ENCODE measurements at regions of chr9 and their contacts with region 1.

Region 1: GRCh38 chr9:34252670-34253459 is 74.0 kb downstream of the UBAP1 start:
- DNase-seq: peak; percentile 63 to 92
- ATAC-seq: peak; percentile 75
- H3K4me3 ChIP-seq: no peak overlapping the region
- H3K27ac ChIP-seq: peak overlapping the region in 1 of 2 donors; percentile 63
- H3K4me1 ChIP-seq: peaks cover 0 to 3% of the 10 kb centered on the region in 2 donors
- H3K27me3 ChIP-seq: no peaks in the 10 kb centered on the region

Region 2: GRCh38 chr9:33816327-33817252 is 436.3 kb before region 1 on chr9 and contains the start of gene UBE2R2:
- intact Hi-C with region 1: loop called in 1 of 2 experiments (anchors 10 kb)
- DNase-seq: peak; percentile 94 to 97
- ATAC-seq: peak; percentile 96
- H3K4me3 ChIP-seq: peak within 1 kb of the TSS; percentile 73 to 98
- H3K27ac ChIP-seq: peak within 1 kb of the TSS; percentile 79 to 93
- H3K4me1 ChIP-seq: no peaks in the 10 kb centered on the region
- H3K27me3 ChIP-seq: no peaks in the 10 kb centered on the region
- total RNA-seq, gene UBE2R2: 34.3 to 35.4 TPM

Region 3: GRCh38 chr9:34126207-34127034 is 126.4 kb before region 1 on chr9 and contains the start of gene DCAF12:
- intact Hi-C with region 1: loop called in 1 of 2 experiments (anchors 5 kb)
- DNase-seq: peak; percentile 95 to 97
- ATAC-seq: peak; percentile 98
- H3K4me3 ChIP-seq: peak within 1 kb of the TSS; percentile 74 to 91
- H3K27ac ChIP-seq: peak within 1 kb of the TSS; percentile 20 to 79
- H3K4me1 ChIP-seq: no peaks in the 10 kb centered on the region
- H3K27me3 ChIP-seq: no peaks in the 10 kb centered on the region
- total RNA-seq, gene DCAF12: 20.6 to 35.2 TPM

Region 4: GRCh38 chr9:34343605-34344004 is 90.7 kb after region 1 on chr9:
- intact Hi-C with region 1: no loop called
- DNase-seq: no peak
- ATAC-seq: no peak
- H3K4me3 ChIP-seq: no peak overlapping the region
- H3K27ac ChIP-seq: peak overlapping the region; percentile 46 to 89
- H3K4me1 ChIP-seq: peaks cover 2 to 4% of the 10 kb centered on the region in 2 donors
- H3K27me3 ChIP-seq: no peaks in the 10 kb centered on the region

Region 5: DNA sequence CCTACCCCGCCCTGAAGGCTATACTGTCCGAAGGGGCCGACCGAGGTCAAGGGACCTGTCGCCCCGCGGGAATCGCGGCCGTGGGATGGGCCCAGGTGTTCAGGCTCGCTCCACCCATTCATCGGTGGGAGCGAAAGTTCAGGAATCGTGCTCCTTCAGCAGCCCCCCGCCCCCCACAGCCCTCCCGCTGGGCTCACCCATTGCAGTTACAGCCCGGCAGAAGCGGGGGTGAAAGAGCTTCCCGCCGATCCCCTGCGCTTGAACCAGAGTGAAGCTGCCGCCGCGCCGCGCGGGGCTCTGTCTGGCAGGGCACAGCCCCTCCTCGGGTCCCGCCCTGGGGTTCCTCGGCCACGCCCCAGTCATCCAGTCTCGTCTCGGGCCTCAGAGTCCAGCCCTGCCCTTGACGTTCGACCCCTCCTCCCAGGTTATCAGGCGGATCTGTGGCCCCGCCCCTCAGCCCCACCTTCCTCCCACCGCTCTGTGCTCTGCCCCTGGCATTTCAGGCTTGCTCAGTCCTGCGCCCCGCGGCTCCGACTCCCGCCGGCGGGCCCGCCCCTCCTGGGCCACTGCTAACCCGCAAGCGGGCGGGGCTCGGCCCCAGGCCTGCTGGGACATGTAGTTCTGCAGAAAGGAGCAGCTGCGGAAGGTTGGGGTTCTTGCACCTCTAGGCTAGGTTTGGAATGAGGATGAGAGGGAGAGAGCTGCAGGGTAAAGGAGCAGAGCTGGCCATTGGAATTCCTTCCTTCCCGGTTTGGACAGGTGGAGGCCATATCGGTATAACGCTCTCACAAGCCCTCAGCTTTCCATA is 123.9 kb after region 1 on chr9 and contains the start of gene MYORG:
- intact Hi-C with region 1: loop called in 1 of 2 experiments (anchors 5 kb)
- DNase-seq: peak; percentile 96
- ATAC-seq: peak; percentile 91
- H3K4me3 ChIP-seq: peak within 1 kb of the TSS; percentile 39 to 56
- H3K27ac ChIP-seq: peak within 1 kb of the TSS in 1 of 2 donors; percentile 23
- H3K4me1 ChIP-seq: no peaks in the 10 kb centered on the region
- H3K27me3 ChIP-seq: no peaks in the 10 kb centered on the region
- total RNA-seq, gene MYORG: 6.1 to 9.6 TPM